HCT116 (cell line): ENCODE measurements at regions of chr3 and their contacts with region 1.

Region 1: DNA sequence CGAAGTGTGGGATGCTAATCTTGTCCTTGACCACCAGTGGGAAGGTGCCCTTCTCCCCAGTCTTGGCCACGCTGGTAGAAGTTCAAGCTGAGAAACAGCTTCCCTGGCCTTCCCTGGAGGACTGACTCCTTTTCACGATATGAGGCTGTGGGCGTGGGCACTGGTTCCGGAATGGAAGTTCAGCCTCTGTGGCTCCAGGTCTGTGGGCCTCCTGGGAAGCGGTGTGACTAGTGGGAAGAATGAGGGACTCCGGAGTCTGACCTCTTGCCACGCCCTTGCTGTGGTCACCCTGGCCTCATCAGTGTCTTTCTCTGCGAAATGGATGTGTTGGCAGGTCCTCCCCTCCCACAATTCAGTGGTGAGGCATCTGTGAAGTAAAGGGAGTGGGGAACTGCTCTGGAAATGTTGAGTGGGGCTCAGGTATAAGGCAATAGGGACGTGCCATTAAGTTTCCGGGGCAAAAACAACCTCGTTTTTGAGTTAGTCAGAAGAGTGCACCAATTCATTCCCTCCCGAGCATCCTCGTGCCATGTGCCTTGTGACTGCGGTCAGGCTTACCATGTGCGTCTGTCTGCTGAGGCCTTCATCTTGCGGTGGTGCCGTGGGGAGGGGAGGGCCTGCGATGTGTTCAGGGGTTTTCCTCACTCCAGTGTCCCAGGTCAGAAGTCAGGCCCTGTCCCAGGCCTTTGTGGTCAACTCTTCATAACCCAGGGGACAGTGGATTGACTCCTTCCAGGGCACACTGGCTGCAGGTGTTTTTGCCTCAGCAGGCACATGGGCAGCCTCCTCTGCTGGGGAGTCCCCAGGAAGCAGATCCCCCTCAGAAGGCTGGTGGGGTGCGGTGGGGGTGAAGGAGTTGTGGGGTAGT is 11.8 kb upstream of the SEC13 start:
- DNase-seq: no peak
- ATAC-seq: no peak
- H3K4me3 ChIP-seq: no peak overlapping the region
- H3K27ac ChIP-seq: no peak overlapping the region
- H3K4me1 ChIP-seq: no peaks in the 10 kb centered on the region
- H3K27me3 ChIP-seq: peaks cover 30% of the 10 kb centered on the region; the same call in 1 of the 2 replicates
- CTCF ChIP-seq: no peak
- POLR2A ChIP-seq: no peak
- RAD21 ChIP-seq: no peak

Region 2: DNA sequence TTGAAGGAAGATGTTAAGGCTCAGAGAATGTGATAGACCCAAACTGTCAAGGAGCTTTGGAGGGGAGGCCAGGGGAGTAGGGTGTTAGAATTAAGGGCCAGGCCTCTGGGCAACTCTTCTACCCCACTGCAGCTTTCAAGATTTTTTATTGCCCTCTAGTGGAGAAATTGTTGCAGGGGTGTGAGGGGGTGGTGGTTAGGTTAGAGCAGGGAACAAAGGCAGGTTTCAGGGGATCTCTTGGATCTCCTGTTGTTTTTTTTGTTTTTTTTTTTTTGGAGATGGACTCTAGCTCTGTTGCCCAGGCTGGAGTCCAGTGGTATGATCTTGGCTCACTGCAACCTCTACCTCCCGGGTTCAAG is 10.4 kb before region 1 on chr3:
- CTCF ChIA-PET with region 1: interaction called, 11 read pairs
- POLR2A ChIA-PET with region 1: no interaction called
- RAD21 ChIA-PET with region 1: no interaction called
- intact Hi-C with region 1: no loop called
- DNase-seq: peak; percentile 29
- ATAC-seq: peak; percentile 41
- H3K4me3 ChIP-seq: no peak overlapping the region
- H3K27ac ChIP-seq: no peak overlapping the region
- H3K4me1 ChIP-seq: peaks cover 0 to 19% of the 10 kb centered on the region in 2 experiments; a peak in 2 of 4 replicates
- H3K27me3 ChIP-seq: peaks cover 15% of the 10 kb centered on the region; the same call in 1 of the 2 replicates
- CTCF ChIP-seq: peak; percentile 57 to 65 (median 62); a peak in 5 of 6 replicates
- POLR2A ChIP-seq: no peak
- RAD21 ChIP-seq: peak; percentile 72